Caco-2 (cell line): ENCODE measurements at regions of chr3 and their contacts with region 1.

Region 1: DNA sequence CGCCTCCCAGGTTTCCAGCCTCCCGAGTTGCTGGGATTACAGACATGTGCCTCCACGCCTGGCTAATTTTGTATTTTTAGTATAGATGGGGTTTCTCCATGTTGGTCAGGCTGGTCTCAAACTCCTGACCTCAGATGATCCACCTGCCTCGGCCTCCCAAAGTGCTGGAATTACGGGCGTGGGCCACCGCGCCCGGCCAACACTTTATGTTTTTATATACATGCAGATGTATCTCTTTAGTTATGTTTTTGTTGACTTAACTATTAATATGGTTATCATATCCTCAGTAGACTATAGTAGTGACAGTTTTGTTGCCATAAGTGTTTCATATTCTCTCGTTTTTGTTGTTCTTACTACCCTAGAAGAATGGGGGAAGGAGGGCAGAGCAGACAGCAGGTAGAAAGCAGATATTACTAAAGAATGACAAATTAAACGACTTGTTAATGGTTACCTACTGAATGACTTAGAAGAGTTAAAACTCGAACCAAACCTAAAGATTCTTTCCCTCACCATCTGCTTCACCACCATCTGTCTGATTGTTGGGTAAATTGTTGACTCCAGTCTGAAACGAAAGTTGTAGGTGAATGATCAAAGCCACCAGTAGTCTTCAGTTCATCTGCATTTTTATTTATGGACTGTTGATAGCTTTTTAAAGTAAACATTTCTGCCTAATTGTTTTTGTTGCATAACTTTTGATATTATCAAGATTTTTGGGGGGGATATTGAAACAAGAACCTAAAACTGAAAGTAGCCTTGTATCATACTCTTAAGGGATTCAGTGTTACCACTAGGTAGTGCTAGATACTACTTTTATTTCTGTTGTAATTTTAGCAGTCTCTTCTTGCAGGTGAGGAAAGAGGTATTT is 89.3 kb downstream of the RASA2 start:
- DNase-seq: no peak
- H3K4me3 ChIP-seq: no peak overlapping the region
- H3K4me3 Mint-ChIP-seq: no peak overlapping the region
- H3K27ac Mint-ChIP-seq: peak overlapping the region; percentile 3
- H3K4me1 ChIP-seq: no peaks in the 10 kb centered on the region
- H3K4me1 Mint-ChIP-seq: no peaks in the 10 kb centered on the region
- H3K27me3 ChIP-seq: no peaks in the 10 kb centered on the region
- H3K27me3 Mint-ChIP-seq: no peaks in the 10 kb centered on the region
- CTCF ChIP-seq: peak; percentile 35 to 52

Region 2: GRCh38 chr3:141913150-141913811 is 337.2 kb after region 1 on chr3:
- CTCF ChIA-PET with region 1: no interaction called
- POLR2A ChIA-PET with region 1: no interaction called
- intact Hi-C with region 1: loop called (anchors 10 kb)
- DNase-seq: peak in 1 of 2 experiments; percentile 57
- H3K4me3 ChIP-seq: no peak overlapping the region
- H3K4me3 Mint-ChIP-seq: no peak overlapping the region
- H3K27ac Mint-ChIP-seq: no peak overlapping the region
- H3K4me1 ChIP-seq: no peaks in the 10 kb centered on the region
- H3K4me1 Mint-ChIP-seq: no peaks in the 10 kb centered on the region
- H3K27me3 ChIP-seq: no peaks in the 10 kb centered on the region
- H3K27me3 Mint-ChIP-seq: no peaks in the 10 kb centered on the region
- CTCF ChIP-seq: peak; percentile 45 to 53

Region 3: DNA sequence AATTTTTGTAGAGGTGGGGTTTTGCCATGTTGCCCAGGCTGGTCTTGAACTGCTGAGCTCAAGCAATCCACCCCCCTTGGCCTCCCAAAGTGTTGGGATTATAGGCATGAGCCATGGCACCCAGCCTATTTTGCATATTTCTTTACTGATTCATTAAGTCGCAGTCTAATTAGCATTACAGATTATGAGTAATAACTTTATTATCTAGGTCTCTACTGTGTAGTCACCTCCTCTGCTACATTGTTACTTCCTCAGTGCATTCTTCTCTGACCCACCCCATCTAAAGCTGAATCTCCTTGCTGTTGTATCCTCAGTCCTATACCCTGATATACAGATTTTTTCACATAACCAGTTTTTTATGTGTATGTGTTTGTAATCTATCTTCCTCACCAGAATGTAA is 511.6 kb after region 1 on chr3:
- CTCF ChIA-PET with region 1: no interaction called
- POLR2A ChIA-PET with region 1: no interaction called
- intact Hi-C with region 1: no loop called
- DNase-seq: no peak
- H3K4me3 ChIP-seq: no peak overlapping the region
- H3K4me3 Mint-ChIP-seq: peak overlapping the region; percentile 23
- H3K27ac Mint-ChIP-seq: peak overlapping the region; percentile 76
- H3K4me1 ChIP-seq: peaks cover 35% of the 10 kb centered on the region
- H3K4me1 Mint-ChIP-seq: peaks cover 23% of the 10 kb centered on the region
- H3K27me3 ChIP-seq: no peaks in the 10 kb centered on the region
- H3K27me3 Mint-ChIP-seq: no peaks in the 10 kb centered on the region
- CTCF ChIP-seq: no peak

Region 4: GRCh38 chr3:142279965-142280590 is 704.0 kb after region 1 on chr3:
- CTCF ChIA-PET with region 1: no interaction called
- POLR2A ChIA-PET with region 1: no interaction called
- intact Hi-C with region 1: loop called (anchors 2 kb)
- DNase-seq: peak; percentile 55 to 64
- H3K4me3 ChIP-seq: no peak overlapping the region
- H3K4me3 Mint-ChIP-seq: no peak overlapping the region
- H3K27ac Mint-ChIP-seq: no peak overlapping the region
- H3K4me1 ChIP-seq: no peaks in the 10 kb centered on the region
- H3K4me1 Mint-ChIP-seq: no peaks in the 10 kb centered on the region
- H3K27me3 ChIP-seq: no peaks in the 10 kb centered on the region
- H3K27me3 Mint-ChIP-seq: no peaks in the 10 kb centered on the region
- CTCF ChIP-seq: peak; percentile 48 to 56